ENCODE measurements at regions of chr11 and their contacts with region 1.

Region 1: DNA sequence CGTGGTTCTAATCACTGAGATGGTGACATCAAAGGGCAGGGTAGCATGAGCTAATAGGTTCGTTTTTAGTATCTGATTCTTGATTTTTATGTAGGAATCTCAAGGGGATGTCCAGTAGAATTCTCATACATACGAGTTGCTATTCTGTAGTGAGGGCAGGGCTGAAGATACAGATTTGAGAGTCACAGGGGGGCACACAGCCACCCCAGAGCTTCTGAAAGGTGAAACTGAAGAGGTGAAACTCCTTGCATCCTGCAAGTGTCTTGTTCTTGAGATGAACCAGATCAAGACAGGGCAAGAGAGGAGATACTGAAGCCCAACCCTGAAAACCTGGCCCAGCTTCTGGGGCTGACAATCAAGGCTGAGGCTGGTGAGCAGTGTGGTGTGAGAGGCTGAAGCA is 35.6 kb upstream of the TMEM123 start:
- DNase-seq: no peak
- H3K4me3 Mint-ChIP-seq: no peak overlapping the region
- H3K27ac Mint-ChIP-seq: no peak overlapping the region
- H3K4me1 Mint-ChIP-seq: peaks cover 19% of the 10 kb centered on the region
- H3K27me3 Mint-ChIP-seq: no peaks in the 10 kb centered on the region
- CTCF ChIP-seq: no peak

Region 2: GRCh38 chr11:102306048-102306585 is 182.1 kb before region 1 on chr11:
- CTCF ChIA-PET with region 1: no interaction called
- POLR2A ChIA-PET with region 1: no interaction called
- intact Hi-C with region 1: no loop called
- DNase-seq: peak; percentile 96
- H3K4me3 Mint-ChIP-seq: peak overlapping the region; percentile 50
- H3K27ac Mint-ChIP-seq: peak overlapping the region; percentile 99
- H3K4me1 Mint-ChIP-seq: peaks cover 54% of the 10 kb centered on the region
- H3K27me3 Mint-ChIP-seq: no peaks in the 10 kb centered on the region
- CTCF ChIP-seq: peak; percentile 17

Region 3: DNA sequence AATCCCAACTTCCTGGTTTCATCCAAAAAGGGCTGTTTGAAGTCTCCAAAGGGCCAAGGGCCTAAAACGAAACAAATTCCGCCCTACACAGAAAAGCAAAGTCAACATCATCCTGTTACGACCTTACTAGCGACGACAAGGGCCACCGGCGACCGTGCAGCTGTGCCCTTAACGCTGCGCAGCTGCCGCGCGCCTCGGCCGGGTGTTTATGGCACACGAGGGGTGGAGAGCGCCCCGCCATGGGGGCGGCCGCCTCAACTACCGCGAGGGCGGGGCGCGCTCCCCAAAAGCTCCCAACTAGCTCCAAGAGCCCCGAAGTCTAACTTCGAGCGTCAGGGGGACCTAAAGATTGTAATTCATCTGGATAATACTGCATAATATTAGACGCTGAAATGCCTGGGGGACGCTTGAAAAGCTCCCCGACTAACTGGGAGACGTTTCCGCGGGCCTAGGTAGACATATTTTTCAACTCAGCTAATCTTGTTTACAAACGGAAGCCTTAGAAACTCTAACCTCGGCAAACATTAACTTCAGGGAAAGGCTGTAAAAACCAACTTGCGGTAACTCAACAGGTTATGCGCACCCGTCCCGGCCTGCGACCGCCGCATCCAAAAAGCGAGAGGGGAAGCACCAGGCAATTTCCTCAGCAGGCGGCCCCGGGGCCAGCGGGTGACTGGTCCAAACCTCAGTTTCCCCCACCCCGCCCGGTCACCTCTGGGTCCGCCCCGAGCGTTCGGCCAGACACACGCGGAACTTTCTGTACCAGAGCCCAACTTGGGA is 36.3 kb before region 1 on chr11:
- CTCF ChIA-PET with region 1: interaction called, 4 read pairs
- POLR2A ChIA-PET with region 1: interaction called, 6 read pairs
- intact Hi-C with region 1: loop called (anchors 2 kb)
- DNase-seq: peak; percentile 62
- H3K4me3 Mint-ChIP-seq: peak overlapping the region; percentile 94
- H3K27ac Mint-ChIP-seq: peak overlapping the region; percentile 90
- H3K4me1 Mint-ChIP-seq: peaks cover 35% of the 10 kb centered on the region
- H3K27me3 Mint-ChIP-seq: no peaks in the 10 kb centered on the region
- CTCF ChIP-seq: no peak

Region 4: DNA sequence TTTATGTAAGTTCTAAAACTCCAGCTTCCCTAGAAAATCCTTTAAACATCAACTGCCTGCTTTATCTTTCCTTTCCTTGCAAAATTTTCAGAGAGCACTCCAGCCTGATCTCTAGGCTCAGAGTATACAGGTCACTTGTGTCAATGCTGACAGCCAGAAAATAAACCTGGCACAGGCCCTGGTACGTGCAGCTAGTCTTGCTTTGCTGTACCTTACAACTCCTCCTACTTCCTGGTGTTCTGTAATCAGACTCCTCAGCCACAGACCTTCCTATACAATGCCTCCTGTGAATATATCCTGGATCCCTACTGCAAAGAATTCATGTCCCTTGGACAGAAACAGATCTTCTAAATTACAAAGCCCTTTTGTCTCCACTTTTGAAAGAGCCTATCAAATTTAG is 11.4 kb before region 1 on chr11:
- CTCF ChIA-PET with region 1: interaction called, 3 read pairs
- POLR2A ChIA-PET with region 1: interaction called, 11 read pairs
- intact Hi-C with region 1: no loop called
- DNase-seq: peak; percentile 73
- H3K4me3 Mint-ChIP-seq: no peak overlapping the region
- H3K27ac Mint-ChIP-seq: peak overlapping the region; percentile 72
- H3K4me1 Mint-ChIP-seq: peaks cover 18% of the 10 kb centered on the region
- H3K27me3 Mint-ChIP-seq: no peaks in the 10 kb centered on the region
- CTCF ChIP-seq: no peak

Measured in MCF 10A (cell line).